Panc1 (cell line): ENCODE measurements at regions of chr19 and their contacts with region 1.

Region 1: GRCh38 chr19:35352448-35353304 is 5.0 kb downstream of the FFAR1 start:
- DNase-seq: peak; percentile 73
- ATAC-seq: peak; percentile 89
- H3K4me3 ChIP-seq: no peak overlapping the region
- H3K27ac ChIP-seq: no peak overlapping the region
- H3K4me1 ChIP-seq: no peaks in the 10 kb centered on the region
- H3K27me3 ChIP-seq: 0 out of 2 replicates have a peak, but pooled peaks cover 2% of the 10 kb centered on the region
- CTCF ChIP-seq: peak; percentile 94

Region 2: GRCh38 chr19:35365303-35365702 is 12.6 kb after region 1 on chr19:
- CTCF ChIA-PET with region 1: interaction called, 10 read pairs
- POLR2A ChIA-PET with region 1: no interaction called
- in situ Hi-C with region 1: no loop called
- intact Hi-C with region 1: no loop called
- DNase-seq: no peak
- ATAC-seq: no peak
- H3K4me3 ChIP-seq: no peak overlapping the region
- H3K27ac ChIP-seq: no peak overlapping the region
- H3K4me1 ChIP-seq: no peaks in the 10 kb centered on the region
- H3K27me3 ChIP-seq: peaks cover 4% of the 10 kb centered on the region; the same call in 1 of the 2 replicates
- CTCF ChIP-seq: no peak

Region 3: DNA sequence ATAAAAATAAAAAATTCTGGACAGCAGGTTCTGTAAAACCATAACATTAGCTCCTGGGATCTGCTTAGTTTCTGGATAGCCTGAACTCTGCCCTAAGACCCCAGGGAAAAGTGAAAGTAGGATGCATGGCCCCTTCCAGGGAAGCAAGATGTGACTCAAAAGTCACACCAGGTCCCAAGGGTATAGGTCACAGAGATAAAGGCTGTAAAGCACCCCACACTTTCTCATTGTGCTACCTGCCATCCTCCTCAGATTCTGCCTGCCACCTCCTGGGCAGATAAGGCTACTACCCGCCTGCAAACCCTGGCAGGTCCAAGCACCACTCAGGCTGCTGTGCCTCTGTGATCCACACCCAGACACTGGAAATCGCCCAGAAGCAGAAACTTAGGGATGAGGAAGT is 116.0 kb after region 1 on chr19:
- CTCF ChIA-PET with region 1: interaction called, 23 read pairs
- POLR2A ChIA-PET with region 1: no interaction called
- in situ Hi-C with region 1: no loop called
- intact Hi-C with region 1: loop called (anchors 1 kb)
- DNase-seq: peak; percentile 54
- ATAC-seq: peak; percentile 99
- H3K4me3 ChIP-seq: no peak overlapping the region
- H3K27ac ChIP-seq: no peak overlapping the region
- H3K4me1 ChIP-seq: no peaks in the 10 kb centered on the region
- H3K27me3 ChIP-seq: peaks cover 8% of the 10 kb centered on the region; the same call in 1 of the 2 replicates
- CTCF ChIP-seq: peak; percentile 84

Region 4: GRCh38 chr19:35495107-35496064 is 142.7 kb after region 1 on chr19:
- CTCF ChIA-PET with region 1: interaction called, 17 read pairs
- POLR2A ChIA-PET with region 1: no interaction called
- in situ Hi-C with region 1: no loop called
- intact Hi-C with region 1: loop called (anchors 10 kb)
- DNase-seq: peak; percentile 33
- ATAC-seq: peak; percentile 95
- H3K4me3 ChIP-seq: peak overlapping the region in 1 of 2 experiments; percentile 30; a peak in 2 of 4 replicates
- H3K27ac ChIP-seq: no peak overlapping the region
- H3K4me1 ChIP-seq: no peaks in the 10 kb centered on the region
- H3K27me3 ChIP-seq: peaks cover 12% of the 10 kb centered on the region
- CTCF ChIP-seq: peak; percentile 98